ENCODE measurements at regions of chr11 and their contacts with region 1.

Region 1: GRCh38 chr11:128342511-128343134 is 244.7 kb downstream of the ETS1 start:
- DNase-seq: peak; percentile 94 to 95
- H3K4me3 ChIP-seq: no peak overlapping the region
- H3K27ac ChIP-seq: peak overlapping the region; percentile 43 to 87 (median 69)
- H3K4me1 ChIP-seq: peaks cover 30 to 33% of the 10 kb centered on the region in 2 donors
- H3K27me3 ChIP-seq: no peaks in the 10 kb centered on the region
- CTCF ChIP-seq: no peak
- POLR2A ChIP-seq: no peak

Region 2: DNA sequence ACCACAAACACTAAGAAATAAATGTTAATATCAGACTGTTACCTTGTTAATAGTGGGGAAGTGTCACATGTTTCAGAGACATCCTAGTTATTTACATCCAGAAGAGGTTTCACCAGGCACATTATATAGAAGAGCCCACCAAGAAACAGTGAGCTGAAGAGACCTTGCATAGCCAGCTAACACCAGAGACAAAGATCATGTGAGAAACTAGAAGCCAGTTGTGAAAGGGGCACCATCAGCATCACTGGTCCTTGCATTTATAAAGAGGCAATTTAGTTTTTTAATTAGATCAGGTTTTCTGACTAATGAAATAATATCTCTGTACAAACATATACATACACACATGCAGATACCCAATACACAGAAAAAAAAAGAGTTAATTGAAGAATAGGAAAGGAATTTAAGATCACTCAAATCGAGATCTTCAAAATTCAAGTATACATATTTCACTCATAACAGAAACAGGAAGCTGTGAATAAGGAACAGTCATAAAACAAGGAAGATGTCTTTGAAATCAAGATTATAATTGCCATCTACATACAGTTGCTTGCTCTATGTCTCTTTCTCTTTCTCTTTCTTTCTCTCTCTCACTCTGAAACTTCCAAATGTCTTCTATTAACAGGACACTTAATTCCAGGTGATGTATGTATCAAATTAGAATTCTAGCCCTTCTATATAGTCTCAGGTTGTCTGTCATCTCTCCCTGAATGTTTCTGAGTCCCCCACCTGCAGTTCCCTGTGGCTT is 103.9 kb before region 1 on chr11:
- intact Hi-C with region 1: no loop called
- DNase-seq: no peak
- H3K4me3 ChIP-seq: no peak overlapping the region
- H3K27ac ChIP-seq: no peak overlapping the region
- H3K4me1 ChIP-seq: peaks cover 0 to 6% of the 10 kb centered on the region in 2 donors
- H3K27me3 ChIP-seq: no peaks in the 10 kb centered on the region
- CTCF ChIP-seq: no peak
- POLR2A ChIP-seq: no peak

Region 3: DNA sequence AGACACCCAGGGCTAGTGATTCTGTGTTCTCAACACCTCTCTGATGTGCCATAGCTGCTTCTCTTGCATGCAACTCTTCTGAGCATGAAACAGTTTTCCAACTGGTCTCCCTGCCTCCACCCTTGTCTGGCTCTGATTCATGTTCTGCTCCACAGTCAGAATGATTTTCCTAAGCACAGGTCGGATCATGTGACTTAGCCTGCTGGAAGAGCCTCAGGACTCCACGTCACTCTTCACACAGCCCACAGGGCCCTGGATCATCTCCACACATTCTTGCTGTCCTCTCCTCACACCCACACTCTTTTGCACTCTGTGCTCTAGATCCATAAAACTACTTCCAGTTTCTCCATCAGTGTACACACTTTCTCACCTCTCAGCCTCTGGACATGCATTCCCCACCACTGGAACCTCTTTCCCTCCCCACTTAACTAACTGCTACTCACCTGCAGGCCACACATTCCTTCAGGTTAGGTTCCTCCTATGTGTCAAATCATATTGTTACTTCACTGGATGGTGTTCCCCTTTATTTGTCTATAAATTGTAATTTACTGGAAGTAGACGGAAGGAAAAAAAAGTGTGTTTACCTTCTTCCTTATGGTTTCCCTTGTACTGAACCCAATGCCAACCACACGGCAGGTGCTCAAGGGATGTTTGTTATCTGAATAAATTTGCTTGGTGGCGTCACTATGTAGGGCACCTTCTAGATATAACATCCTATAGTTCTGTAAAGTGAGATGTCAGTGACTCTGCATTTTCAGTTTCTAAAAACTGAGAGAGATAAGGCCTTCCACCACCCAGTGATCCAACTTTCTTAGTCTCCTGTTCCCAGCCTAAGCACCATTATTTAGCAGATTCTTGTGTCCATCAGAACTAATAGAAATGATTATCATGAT is 111.1 kb after region 1 on chr11:
- intact Hi-C with region 1: loop called (anchors 10 kb)
- DNase-seq: peak; percentile 71 to 74
- H3K4me3 ChIP-seq: no peak overlapping the region
- H3K27ac ChIP-seq: peak overlapping the region; percentile 37 to 89 (median 89)
- H3K4me1 ChIP-seq: peaks cover 25 to 28% of the 10 kb centered on the region in 2 donors
- H3K27me3 ChIP-seq: no peaks in the 10 kb centered on the region
- CTCF ChIP-seq: peak in 1 of 6 experiments; percentile 12
- POLR2A ChIP-seq: peak in 1 of 2 donors; percentile 32

Region 4: GRCh38 chr11:128552783-128553661 is 210.4 kb after region 1 on chr11:
- intact Hi-C with region 1: no loop called
- DNase-seq: no peak
- H3K4me3 ChIP-seq: no peak overlapping the region
- H3K27ac ChIP-seq: peak overlapping the region in 1 of 3 donors; percentile 10
- H3K4me1 ChIP-seq: peaks cover 19 to 31% of the 10 kb centered on the region in 2 donors
- H3K27me3 ChIP-seq: no peaks in the 10 kb centered on the region
- CTCF ChIP-seq: no peak
- POLR2A ChIP-seq: no peak

Measured in thyroid gland (tissue), 4 donors.